ENCODE measurements at regions of chr1 and their contacts with region 1.

Region 1: DNA sequence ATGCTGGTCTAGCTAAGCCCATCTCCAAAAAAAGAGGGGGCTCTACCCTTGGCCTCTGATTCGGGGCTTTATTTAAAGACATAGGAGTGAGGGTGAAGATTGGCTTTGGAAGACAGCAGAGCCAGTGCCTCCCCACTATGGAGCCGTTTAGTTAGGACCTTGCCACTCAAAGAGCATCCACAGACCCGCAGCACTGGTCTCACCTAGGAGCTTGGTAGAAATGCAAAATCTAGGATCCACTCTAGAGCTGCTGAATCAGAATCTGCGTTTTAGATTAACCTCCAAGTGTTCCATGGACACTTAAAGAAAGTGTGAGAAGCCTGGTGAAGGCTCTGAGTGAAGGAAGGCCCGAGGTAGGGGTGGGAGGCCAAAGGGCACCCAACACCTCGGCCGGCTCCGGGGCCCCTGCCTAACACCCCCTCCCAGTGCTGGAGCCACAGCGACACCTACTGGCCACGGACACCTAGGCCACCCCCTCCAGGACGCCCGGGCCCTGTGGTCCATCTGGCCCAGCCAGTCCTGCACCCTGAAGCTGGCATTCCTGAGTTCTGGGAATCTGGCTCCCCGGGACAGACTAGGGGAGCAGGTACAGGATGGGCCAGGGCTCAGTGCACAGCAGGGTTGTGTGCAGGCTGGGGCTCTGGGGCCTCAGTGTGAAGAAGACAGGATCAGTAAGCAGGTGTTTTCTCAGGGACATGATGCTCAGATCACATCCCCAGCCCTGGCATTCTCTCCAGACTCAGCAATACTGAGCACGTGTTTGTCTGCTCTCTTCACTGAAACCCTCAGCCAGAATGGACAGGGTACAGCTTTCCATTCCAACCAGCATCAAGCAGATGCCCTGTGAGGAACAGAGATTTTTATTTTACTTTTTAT is 79.2 kb downstream of the TMEM53 start:
- DNase-seq: peak; percentile 19 to 72
- H3K4me3 ChIP-seq: no peak overlapping the region
- H3K27ac ChIP-seq: no peak overlapping the region
- H3K4me1 ChIP-seq: no peaks in the 10 kb centered on the region
- H3K27me3 ChIP-seq: peaks cover 4% of the 10 kb centered on the region
- CTCF ChIP-seq: peak; percentile 89 to 97 (median 92)

Region 2: GRCh38 chr1:44002606-44003157 is 592.4 kb before region 1 on chr1:
- intact Hi-C with region 1: loop called (anchors 10 kb)
- DNase-seq: no peak
- H3K4me3 ChIP-seq: no peak overlapping the region
- H3K27ac ChIP-seq: no peak overlapping the region
- H3K4me1 ChIP-seq: peaks cover 3 to 4% of the 10 kb centered on the region in 2 donors
- H3K27me3 ChIP-seq: no peaks in the 10 kb centered on the region
- CTCF ChIP-seq: no peak

Region 3: GRCh38 chr1:44200336-44200735 is 394.8 kb before region 1 on chr1:
- intact Hi-C with region 1: loop called (anchors 5 kb)
- DNase-seq: no peak
- H3K4me3 ChIP-seq: no peak overlapping the region
- H3K27ac ChIP-seq: no peak overlapping the region
- H3K4me1 ChIP-seq: no peaks in the 10 kb centered on the region
- H3K27me3 ChIP-seq: no peaks in the 10 kb centered on the region
- CTCF ChIP-seq: no peak

Region 4: DNA sequence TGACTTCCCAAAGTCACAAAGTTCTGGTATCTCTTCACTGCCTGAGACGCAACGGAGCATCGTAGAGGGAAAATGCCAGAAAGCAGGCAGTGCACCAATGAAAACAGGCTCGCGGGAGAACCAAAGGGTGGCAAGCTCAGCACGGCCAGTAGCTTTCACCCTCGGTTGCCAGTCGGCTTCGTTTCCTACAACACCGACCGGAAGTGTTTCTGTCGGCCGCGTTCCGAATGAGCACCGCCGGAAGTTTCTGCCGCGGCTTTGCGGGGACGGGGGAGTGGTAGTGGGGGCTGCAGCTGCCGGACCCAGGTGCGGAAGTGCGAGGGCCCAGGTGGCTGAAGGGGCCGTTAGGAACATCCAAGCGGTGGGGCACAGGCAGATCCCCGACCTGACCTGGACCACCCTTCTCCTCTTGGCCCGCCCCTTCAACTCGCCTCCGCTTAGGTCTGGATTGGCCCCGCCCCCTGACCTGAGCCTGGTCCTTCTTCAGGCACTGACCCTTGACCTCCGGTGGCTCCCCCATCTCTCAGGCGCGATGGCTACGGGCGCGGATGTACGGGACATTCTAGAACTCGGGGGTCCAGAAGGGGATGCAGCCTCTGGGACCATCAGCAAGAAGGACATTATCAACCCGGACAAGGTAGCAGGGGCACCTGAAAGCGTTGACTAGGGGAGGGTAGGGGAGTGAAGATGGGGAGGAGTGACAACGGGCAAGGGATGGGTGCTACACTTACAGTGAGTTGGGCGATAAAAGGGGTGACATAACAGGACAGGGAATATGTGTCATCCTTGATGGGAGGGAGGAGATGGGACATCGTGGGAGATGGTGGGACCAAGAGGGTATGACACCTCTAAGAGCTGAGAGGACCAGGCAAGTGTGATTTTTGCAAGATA is 381.6 kb before region 1 on chr1 and contains the start of gene DMAP1:
- intact Hi-C with region 1: loop called (anchors 1 kb)
- DNase-seq: peak; percentile 35 to 89
- H3K4me3 ChIP-seq: peak within 1 kb of the TSS; percentile 72 to 91
- H3K27ac ChIP-seq: peak within 1 kb of the TSS; percentile 63 to 79
- H3K4me1 ChIP-seq: peaks cover 2 to 7% of the 10 kb centered on the region in 2 donors
- H3K27me3 ChIP-seq: no peaks in the 10 kb centered on the region
- CTCF ChIP-seq: peak in 1 of 3 experiments; percentile 17
- total RNA-seq, gene DMAP1: 42.7 TPM

Region 5: DNA sequence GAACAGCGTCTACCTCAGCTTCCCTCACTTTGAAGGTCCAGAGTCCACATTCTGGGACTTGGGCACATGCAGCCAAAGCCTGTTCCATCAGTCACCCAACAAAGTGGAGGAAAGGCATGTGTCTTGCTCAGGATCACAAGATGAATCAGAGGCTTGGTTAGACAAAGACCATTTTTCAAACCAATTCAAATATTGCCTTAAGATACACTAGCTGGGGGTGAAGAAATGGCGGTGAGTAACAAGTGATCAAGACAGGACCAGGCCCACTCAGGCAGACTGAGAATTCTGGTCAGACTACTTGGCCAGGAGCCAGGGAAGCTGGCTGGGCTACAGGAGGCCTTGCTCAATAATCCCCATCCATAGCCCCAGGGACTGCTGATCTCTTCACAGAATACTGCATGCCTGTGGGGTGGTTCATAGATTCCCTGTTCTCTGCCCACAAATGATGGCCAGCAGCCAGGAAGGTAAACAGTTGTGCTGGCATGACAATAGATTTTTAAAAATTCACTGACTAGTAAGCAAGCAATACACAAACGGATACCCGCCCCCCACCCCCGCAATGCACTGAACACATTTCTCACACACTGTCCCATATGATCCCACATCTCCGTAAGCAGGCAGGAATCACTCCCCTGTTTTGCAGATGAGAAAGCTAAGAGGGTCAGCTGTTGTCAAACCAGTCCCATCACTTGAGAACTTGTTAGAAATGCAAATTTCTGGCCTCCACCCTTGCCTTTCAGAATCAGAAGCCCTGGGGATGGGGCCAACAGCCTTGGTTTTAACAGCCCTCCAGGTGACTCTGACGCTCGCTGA is 267.2 kb before region 1 on chr1:
- intact Hi-C with region 1: loop called (anchors 5 kb)
- DNase-seq: peak; percentile 61 to 98
- H3K4me3 ChIP-seq: no peak overlapping the region
- H3K27ac ChIP-seq: peak overlapping the region; percentile 58 to 66
- H3K4me1 ChIP-seq: peaks cover 0 to 18% of the 10 kb centered on the region in 2 donors
- H3K27me3 ChIP-seq: no peaks in the 10 kb centered on the region
- CTCF ChIP-seq: no peak

Region 6: GRCh38 chr1:44377925-44378784 is 217.0 kb before region 1 on chr1:
- intact Hi-C with region 1: loop called (anchors 2 kb)
- DNase-seq: no peak
- H3K4me3 ChIP-seq: no peak overlapping the region
- H3K27ac ChIP-seq: no peak overlapping the region
- H3K4me1 ChIP-seq: no peaks in the 10 kb centered on the region
- H3K27me3 ChIP-seq: no peaks in the 10 kb centered on the region
- CTCF ChIP-seq: peak; percentile 41 to 59 (median 46)

Region 7: DNA sequence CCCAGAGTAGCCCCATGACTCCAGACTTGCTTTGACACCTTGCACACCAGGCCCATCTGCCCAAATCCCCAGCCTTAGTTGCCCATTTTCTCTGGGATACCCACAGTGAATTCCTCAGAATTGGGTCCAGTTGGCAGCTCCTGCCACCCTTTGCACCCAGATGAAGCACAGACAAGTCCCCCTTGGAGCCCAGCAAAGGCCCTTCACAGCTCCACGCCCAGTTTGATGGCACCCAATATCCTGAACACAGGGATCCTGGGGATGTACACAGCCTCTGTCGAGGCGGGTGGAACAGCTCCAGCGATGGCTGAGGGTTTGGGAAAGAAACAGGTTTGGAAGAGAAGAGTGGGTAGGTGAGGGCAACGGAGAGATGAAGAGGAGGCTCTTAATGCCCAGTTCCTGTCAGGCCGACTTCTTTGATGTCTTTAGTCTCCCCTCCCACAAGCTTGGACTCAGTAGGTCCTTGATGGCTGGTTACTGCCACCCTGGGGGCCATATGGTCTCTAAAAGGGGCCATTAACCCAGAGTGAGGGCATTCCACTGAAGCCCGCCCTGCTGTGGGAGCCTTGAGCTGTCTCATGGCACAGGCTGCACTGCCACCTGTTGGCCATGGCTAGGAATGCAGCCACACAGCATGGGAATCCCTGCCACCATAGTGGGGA is 57.5 kb after region 1 on chr1:
- intact Hi-C with region 1: no loop called
- DNase-seq: peak in 1 of 2 donors; percentile 86
- H3K4me3 ChIP-seq: no peak overlapping the region
- H3K27ac ChIP-seq: peak overlapping the region in 1 of 2 donors; percentile 42
- H3K4me1 ChIP-seq: no peaks in the 10 kb centered on the region
- H3K27me3 ChIP-seq: no peaks in the 10 kb centered on the region
- CTCF ChIP-seq: peak; percentile 91 to 97 (median 91)